ENCODE measurements at regions of chr5 and their contacts with region 1.

Region 1: GRCh38 chr5:56640763-56641406 is 174.5 kb upstream of the MAP3K1 start:
- DNase-seq: peak in 2 of 14 experiments; percentile 26 to 30
- ATAC-seq: no peak
- H3K4me3 ChIP-seq: no peak overlapping the region
- H3K4me3 Mint-ChIP-seq: no peak overlapping the region
- H3K27ac ChIP-seq: no peak overlapping the region
- H3K27ac Mint-ChIP-seq: peak overlapping the region; percentile 97
- H3K4me1 ChIP-seq: peaks cover 6% of the 10 kb centered on the region
- H3K4me1 Mint-ChIP-seq: peaks cover 52% of the 10 kb centered on the region
- H3K27me3 ChIP-seq: no peaks in the 10 kb centered on the region
- H3K27me3 Mint-ChIP-seq: no peaks in the 10 kb centered on the region
- CTCF ChIP-seq: no peak

Region 2: GRCh38 chr5:56588636-56589480 is 52.0 kb before region 1 on chr5:
- CTCF ChIA-PET with region 1: no interaction called
- POLR2A ChIA-PET with region 1: interaction called, 6 read pairs
- intact Hi-C with region 1: loop called in 1 of 2 experiments (anchors 2 kb)
- DNase-seq: peak; percentile 32 to 92 (median 60)
- ATAC-seq: peak; percentile 72
- H3K4me3 ChIP-seq: no peak overlapping the region
- H3K4me3 Mint-ChIP-seq: peak overlapping the region; percentile 52
- H3K27ac ChIP-seq: peak overlapping the region; percentile 60 to 95
- H3K27ac Mint-ChIP-seq: peak overlapping the region; percentile 87
- H3K4me1 ChIP-seq: peaks cover 51% of the 10 kb centered on the region
- H3K4me1 Mint-ChIP-seq: peaks cover 62% of the 10 kb centered on the region
- H3K27me3 ChIP-seq: no peaks in the 10 kb centered on the region
- H3K27me3 Mint-ChIP-seq: no peaks in the 10 kb centered on the region
- CTCF ChIP-seq: no peak

Region 3: DNA sequence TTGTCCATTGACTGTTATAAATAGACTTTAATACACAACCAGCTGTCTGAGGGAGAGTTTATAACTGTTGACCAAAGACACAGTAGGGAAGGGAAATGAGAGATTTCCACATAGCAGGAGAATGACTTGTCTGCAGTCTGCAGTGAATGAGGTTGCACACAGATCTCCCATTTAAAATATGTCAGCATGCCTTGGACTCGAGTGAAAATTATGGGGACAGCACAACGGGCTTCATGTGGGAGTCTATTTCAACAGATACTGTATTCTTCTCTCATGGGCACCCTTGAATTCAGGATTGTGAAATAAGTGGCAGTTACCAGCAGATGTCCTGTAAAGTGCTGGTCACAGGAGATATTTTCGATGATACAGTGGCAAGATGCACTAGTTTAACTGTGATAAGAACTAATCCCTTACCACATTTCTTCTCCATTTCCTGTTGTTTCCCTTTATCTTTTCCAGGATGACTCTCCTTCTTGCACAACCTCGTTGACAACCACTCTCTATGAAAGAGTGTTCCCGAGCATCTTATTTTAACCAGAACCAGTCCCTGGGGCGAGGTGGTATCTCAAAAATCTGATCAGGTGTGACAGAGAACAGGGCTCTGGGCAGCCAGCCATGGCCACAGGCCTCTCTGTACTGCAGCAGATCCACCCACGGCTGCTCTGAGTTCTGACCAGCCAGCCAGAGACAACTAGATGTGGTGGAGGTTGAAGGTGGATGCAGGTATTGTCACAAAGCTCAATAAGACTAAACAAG is 123.0 kb after region 1 on chr5:
- CTCF ChIA-PET with region 1: no interaction called
- POLR2A ChIA-PET with region 1: no interaction called
- intact Hi-C with region 1: no loop called
- DNase-seq: no peak
- ATAC-seq: no peak
- H3K4me3 ChIP-seq: no peak overlapping the region
- H3K4me3 Mint-ChIP-seq: no peak overlapping the region
- H3K27ac ChIP-seq: no peak overlapping the region
- H3K27ac Mint-ChIP-seq: no peak overlapping the region
- H3K4me1 ChIP-seq: no peaks in the 10 kb centered on the region
- H3K4me1 Mint-ChIP-seq: peaks cover 7% of the 10 kb centered on the region
- H3K27me3 ChIP-seq: no peaks in the 10 kb centered on the region
- H3K27me3 Mint-ChIP-seq: no peaks in the 10 kb centered on the region
- CTCF ChIP-seq: no peak

Measured in CD4-positive, alpha-beta T cell (primary cell).